ENCODE measurements at regions of chr6 and their contacts with region 1.

Region 1: DNA sequence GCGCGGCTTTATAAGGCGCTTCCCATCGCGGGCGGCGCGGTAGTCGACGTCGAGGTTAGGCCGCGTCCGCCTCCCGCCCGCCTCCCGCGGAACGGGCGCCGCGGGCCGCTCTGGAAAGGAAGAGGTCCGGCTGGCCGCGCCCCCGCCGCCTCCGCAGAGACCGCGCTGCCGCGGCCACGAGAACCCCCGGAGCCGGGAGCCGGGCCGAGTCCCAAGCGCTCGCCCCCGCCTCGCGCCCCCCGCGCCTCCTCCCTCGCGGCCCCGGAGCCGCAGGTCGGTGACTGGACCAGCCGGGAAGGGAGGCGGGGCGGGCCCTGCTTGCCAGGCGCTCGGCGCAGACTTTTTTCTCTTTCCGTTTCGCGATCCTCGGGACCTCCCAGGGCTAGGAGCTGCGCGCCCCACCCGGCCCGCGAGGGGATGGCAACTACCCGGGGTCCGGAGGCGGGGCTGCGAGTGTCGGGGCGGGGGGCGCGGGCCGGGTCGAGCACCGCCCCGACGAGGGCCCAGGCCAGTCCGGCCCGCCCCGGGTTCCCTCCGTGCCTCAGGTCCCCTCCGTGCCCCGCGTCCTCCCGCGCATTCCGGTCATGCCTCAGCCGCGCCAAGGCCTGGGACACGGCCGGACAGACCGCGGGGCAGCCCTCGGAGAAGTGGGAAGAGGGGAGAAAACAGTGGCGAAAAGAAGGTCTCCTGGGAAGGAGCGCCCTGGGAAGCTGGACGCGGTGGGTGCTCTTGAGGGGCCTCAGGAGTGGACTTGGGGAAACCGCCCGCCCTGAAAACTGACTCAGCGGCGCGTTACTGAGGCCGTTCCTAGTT is 423 bp upstream of the PXDC1 start:
- DNase-seq: no peak
- H3K4me3 ChIP-seq: peak overlapping the region; percentile 89 to 100
- H3K27ac ChIP-seq: peak overlapping the region; percentile 100
- H3K4me1 ChIP-seq: peaks cover 30% of the 10 kb centered on the region
- H3K27me3 ChIP-seq: no peaks in the 10 kb centered on the region
- CTCF ChIP-seq: peak in 1 of 3 experiments; percentile 26
- POLR2A ChIP-seq: peak in 1 of 2 donors; percentile 82

Region 2: DNA sequence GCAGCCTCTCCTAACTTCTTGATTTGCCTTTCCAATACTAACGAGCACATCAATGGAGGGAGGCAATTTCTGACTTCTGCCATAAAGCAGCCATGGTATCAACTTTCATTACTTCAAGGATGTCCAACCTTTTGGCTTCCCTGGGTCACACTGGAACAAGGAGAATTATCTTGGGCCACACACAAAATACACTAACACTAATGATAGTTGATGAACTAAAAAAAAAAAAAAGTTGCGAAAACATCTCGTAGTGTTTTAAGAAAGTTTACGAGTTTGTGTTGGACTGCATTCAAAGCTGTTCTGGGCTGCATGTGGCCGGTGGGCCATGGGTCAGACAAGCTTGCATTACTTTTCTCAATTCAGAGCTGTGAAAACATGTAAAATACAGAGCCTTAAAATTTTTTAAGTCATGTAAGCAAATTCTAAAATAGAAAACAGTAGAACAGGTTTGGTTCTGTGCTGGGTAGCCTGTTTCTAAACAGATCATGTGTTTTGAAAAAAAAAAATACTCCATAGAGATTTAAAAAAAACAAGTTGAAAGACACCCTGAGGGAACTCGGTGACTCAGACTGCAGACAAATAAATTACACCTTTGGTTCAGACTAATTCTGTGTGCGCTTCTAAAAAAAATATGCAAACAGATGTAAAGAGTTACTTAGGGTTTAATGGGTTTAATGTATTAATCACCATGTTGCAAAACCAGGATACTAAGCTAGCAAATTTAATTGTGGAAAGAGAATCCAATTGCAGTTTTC is 251.5 kb before region 1 on chr6:
- intact Hi-C with region 1: no loop called
- DNase-seq: no peak
- H3K4me3 ChIP-seq: no peak overlapping the region
- H3K27ac ChIP-seq: peak overlapping the region; percentile 35
- H3K4me1 ChIP-seq: peaks cover 22% of the 10 kb centered on the region
- H3K27me3 ChIP-seq: no peaks in the 10 kb centered on the region
- CTCF ChIP-seq: no peak
- POLR2A ChIP-seq: no peak

Region 3: GRCh38 chr6:3825851-3826581 is 74.1 kb after region 1 on chr6:
- intact Hi-C with region 1: loop called (anchors 5 kb)
- DNase-seq: peak in 1 of 2 donors; percentile 98
- H3K4me3 ChIP-seq: peak overlapping the region; percentile 33 to 34
- H3K27ac ChIP-seq: peak overlapping the region; percentile 86
- H3K4me1 ChIP-seq: peaks cover 40% of the 10 kb centered on the region
- H3K27me3 ChIP-seq: no peaks in the 10 kb centered on the region
- CTCF ChIP-seq: no peak
- POLR2A ChIP-seq: no peak

Region 4: GRCh38 chr6:3848925-3849605 is 97.1 kb after region 1 on chr6 and contains the start of gene FAM50B:
- intact Hi-C with region 1: loop called (anchors 5 kb)
- DNase-seq: peak in 1 of 2 donors; percentile 92
- H3K4me3 ChIP-seq: peak within 1 kb of the TSS; percentile 44 to 52
- H3K27ac ChIP-seq: peak within 1 kb of the TSS; percentile 67
- H3K4me1 ChIP-seq: no peaks in the 10 kb centered on the region
- H3K27me3 ChIP-seq: no peaks in the 10 kb centered on the region
- CTCF ChIP-seq: peak; percentile 88 to 97 (median 95)
- POLR2A ChIP-seq: no peak
- total RNA-seq, gene FAM50B: 4.9 TPM

Measured in vagina (tissue), 2 donors.